Dorsolateral prefrontal cortex (tissue), 120 donors: ENCODE measurements at regions of chr7 and their contacts with region 1.

Region 1: GRCh38 chr7:26853788-26854393 is 10.5 kb downstream of the SKAP2 start:
- DNase-seq: no peak
- H3K4me3 ChIP-seq: no peak overlapping the region
- H3K27ac ChIP-seq: no peak overlapping the region
- H3K27me3 ChIP-seq: peaks cover 0 to 69% (median 27%) of the 10 kb centered on the region in 45 donors
- CTCF ChIP-seq: peak in 55 of 56 donors; percentile 20 to 72 (median 47)

Region 2: DNA sequence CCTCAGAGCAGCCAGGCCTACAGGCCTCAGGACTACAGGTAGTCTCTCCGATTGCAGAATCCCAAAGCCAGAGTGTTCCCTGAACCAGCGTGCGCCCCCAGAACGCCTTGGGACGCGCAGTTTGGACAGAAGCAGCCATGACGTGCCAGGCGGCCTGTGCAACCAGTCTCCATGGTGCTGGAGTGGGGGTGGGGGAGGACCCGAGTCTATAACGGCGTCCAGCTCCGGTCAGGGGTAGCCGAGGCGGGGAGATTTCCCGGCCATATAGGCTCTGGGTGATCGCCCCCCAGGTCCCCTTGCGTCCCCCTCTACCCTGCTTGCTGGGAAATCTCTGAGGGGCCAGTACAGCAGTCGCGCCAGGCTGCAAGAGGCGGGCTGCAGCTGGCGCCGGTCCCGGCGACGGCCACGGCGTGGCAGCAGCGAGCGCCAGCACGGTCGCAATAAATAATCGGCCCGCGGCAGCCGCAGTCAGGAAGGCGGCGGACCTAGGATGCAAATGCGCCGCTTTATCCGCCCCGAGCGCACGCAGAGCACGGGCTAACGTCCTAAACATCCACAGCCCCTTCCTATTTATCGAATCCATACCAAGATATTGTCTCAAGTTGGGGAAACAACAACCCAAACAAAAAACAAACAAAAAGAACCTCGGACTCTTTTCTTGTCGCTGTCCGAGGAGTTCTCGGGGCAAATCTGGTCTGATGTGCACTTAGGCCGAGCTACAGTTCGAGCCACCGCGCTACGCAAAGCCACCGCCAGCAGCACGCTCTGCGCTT is 296.9 kb after region 1 on chr7:
- intact Hi-C with region 1: loop called in 1 of 2 experiments (anchors 10 kb)
- DNase-seq: peak in 7 of 10 donors; percentile 22 to 50 (median 33)
- H3K4me3 ChIP-seq: peak overlapping the region in 47 of 59 donors; percentile 2 to 60 (median 28)
- H3K27ac ChIP-seq: no peak overlapping the region
- H3K27me3 ChIP-seq: peaks cover 46 to 100% (median 100%) of the 10 kb centered on the region in 45 donors
- CTCF ChIP-seq: peak; percentile 34 to 75 (median 67)